Activated CD8-positive, alpha-beta memory T cell treated with anti-CD3 and anti-CD28 coated beads, Interleukin-2, amount 10 ng/mL, durations not matched to agents 7 days and 5 days (primary cell): ENCODE measurements at regions of chr14 and their contacts with region 1.

Region 1: DNA sequence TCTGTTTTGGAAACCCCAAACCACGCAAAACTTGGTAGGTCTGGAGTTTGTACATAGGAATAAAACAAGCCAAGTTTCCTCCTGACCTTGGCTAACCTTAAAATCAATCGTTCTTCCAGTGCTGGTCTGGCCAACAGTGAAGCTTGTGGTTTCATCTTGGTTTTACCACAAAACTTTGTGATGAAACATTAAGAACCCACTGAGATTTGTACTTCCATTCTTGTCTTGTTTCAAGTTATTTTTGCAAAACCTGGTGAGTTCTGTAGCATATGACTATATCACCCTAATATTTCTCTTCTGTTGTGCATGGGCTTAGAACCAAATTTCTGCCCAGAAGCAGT is 26.4 kb downstream of the SIX1 start:
- DNase-seq: no peak
- ATAC-seq: no peak
- H3K4me3 Mint-ChIP-seq: no peak overlapping the region
- H3K27ac Mint-ChIP-seq: no peak overlapping the region
- H3K4me1 Mint-ChIP-seq: peaks cover 6% of the 10 kb centered on the region
- H3K27me3 Mint-ChIP-seq: peaks cover 46% of the 10 kb centered on the region

Region 2: DNA sequence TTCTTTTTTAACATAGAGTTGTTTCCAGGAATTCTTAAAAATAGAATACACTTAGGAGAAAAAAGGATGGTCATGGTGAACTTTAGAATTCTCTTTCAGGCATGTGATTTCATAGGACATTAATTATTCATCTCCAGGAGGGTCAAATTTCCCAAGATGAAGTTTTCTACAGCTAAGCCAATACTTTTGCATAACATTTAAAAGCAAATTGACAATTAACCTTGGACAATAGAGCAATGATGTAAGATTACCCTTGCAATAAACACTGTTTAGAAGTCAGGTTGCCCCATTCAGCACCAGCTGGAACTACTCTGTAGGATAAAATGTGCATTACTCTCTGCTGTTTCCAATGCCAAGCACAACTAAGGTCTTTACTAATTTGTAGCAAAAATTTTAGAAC is 23.2 kb before region 1 on chr14:
- CTCF ChIA-PET with region 1: no interaction called
- DNase-seq: no peak
- ATAC-seq: no peak
- H3K4me3 Mint-ChIP-seq: no peak overlapping the region
- H3K27ac Mint-ChIP-seq: no peak overlapping the region
- H3K4me1 Mint-ChIP-seq: no peaks in the 10 kb centered on the region
- H3K27me3 Mint-ChIP-seq: peaks cover 58% of the 10 kb centered on the region

Region 3: DNA sequence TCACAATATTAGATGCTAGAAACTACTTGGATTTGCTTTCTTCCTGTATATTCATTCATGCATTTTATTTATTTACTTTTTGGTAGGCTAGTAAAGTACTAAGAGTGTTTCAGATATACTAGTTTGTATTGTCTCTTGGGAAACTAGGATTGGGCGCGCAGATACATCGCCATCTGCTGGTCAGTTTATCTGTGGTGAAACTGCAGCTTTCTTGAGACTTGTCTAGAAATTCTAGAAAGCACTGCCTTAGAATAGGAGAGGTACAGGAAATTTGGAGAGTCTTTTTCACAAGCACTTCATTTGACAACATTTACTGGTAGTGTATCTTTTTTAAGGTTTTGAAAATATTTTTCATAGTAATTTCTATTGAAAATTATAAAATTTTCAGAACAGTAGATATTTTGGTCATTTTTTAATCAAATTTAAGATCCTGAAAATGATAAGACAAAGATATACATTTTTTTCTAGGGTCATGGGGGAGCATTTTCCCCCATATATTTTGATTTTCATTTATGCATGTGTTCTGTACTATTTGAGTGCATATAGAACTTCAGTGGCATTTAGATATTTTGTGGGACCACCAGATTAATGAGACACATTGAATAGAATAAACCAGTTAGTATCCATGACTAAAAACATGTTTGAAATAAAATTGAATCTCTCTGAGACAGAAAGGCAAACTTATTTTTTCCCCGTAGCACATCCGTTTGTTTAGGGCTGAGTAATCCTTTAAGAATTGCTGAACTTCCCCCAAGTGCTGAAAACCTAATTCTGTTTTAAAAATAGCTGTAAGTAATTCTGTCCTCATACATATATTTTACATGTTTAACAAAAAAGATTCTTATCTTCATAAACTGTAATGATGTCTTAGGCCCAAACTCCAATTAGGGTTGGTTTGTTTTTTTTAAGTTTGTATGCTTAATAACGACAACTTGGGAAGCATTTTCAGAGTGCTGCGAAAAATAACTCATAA is 402.6 kb after region 1 on chr14:
- CTCF ChIA-PET with region 1: interaction called, 11 read pairs
- DNase-seq: peak; percentile 77
- ATAC-seq: peak; percentile 64
- H3K4me3 Mint-ChIP-seq: no peak overlapping the region
- H3K27ac Mint-ChIP-seq: no peak overlapping the region
- H3K4me1 Mint-ChIP-seq: peaks cover 5% of the 10 kb centered on the region
- H3K27me3 Mint-ChIP-seq: no peaks in the 10 kb centered on the region

Region 4: DNA sequence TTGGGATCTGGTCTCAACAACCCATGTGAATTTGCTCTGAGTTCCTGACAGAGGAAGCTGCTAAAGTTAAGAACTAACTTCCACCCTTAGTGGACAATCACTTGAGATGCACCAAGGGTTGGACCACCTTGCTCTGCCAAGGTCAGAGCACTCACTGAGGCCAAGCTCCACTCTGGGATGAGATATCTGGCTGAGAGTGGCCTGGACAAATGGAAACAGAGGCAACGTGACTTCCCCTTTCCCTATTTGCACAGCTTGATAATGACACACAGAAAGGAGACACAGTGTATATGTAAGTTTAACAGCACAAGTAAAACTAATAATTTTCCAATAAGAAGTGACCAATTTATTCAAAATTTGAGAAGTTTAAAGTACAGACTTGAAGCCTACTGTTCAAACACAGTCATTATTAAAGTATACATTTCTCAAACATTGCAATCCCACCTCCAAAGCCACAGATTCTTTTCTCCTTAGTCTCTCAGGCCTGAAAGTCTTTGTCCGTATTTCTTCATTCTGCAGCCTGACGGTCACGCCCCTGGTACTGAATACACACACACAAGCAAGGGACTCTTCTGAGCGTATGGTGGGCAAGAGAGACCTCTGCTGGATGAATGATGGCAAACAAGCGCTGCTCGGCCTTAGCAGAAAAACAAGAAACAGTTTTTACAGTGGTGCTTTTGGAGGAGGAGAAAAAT is 629.6 kb after region 1 on chr14:
- CTCF ChIA-PET with region 1: interaction called, 17 read pairs
- DNase-seq: peak; percentile 83
- ATAC-seq: peak; percentile 85
- H3K4me3 Mint-ChIP-seq: no peak overlapping the region
- H3K27ac Mint-ChIP-seq: no peak overlapping the region
- H3K4me1 Mint-ChIP-seq: peaks cover 26% of the 10 kb centered on the region
- H3K27me3 Mint-ChIP-seq: peaks cover 19% of the 10 kb centered on the region